ENCODE measurements at regions of chr9 and their contacts with region 1.

Region 1: DNA sequence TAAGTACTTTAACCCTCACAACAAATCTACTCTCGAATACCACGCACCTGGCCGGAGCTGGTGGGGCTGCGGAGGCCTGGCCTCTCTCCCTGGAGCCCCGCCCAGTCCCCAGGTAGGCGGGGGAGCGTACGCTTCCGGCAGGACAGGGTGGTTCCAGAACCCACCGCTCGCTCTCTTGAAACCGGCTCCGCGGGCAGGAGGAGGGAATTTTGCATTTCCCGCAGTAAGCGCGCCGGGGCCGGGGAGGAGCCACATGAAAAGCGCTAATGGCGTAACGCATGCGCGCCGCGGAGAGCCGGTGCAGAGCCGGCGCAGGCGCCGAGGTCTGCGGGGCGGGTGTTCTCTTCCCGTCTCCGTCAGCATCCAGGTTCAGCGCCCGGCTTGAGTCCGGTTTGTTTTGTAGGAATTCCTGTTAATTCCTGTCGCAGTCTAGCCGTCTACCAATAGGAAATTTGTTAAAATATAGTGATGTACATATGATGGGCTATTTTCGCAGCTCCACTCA is 20.8 kb downstream of the CAVIN4 start:
- DNase-seq: peak; percentile 87

Region 2: DNA sequence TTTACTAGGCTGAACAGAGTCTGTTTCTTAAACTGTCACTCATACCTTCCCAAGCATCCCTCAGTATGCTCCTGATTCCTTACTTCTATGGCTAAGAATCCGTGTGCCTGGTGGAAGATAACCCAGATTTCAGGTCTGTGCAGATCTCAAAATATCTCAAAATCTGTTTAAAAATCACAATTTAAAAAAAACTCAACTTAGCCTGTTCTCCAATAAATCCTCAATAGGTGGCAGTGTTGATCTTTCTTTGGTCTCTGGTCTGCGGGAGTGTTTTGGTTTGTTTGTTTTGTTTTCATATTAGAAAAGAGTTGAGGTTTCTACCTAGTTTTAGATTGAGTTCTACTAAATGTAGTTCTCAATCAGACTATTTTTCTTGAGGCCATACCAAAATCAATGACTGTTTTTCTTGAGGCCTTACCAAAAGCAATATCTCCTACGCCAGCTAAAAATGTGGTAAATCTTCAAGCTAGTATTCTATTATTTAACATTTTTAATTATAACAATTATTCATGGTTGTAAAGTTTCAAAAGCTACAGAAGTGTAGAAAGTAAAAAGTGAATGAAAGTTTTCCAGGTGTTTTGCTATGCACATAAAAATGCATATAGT is 1435.8 kb before region 1 on chr9:
- intact Hi-C with region 1: loop called (anchors 10 kb)
- DNase-seq: no peak

Region 3: DNA sequence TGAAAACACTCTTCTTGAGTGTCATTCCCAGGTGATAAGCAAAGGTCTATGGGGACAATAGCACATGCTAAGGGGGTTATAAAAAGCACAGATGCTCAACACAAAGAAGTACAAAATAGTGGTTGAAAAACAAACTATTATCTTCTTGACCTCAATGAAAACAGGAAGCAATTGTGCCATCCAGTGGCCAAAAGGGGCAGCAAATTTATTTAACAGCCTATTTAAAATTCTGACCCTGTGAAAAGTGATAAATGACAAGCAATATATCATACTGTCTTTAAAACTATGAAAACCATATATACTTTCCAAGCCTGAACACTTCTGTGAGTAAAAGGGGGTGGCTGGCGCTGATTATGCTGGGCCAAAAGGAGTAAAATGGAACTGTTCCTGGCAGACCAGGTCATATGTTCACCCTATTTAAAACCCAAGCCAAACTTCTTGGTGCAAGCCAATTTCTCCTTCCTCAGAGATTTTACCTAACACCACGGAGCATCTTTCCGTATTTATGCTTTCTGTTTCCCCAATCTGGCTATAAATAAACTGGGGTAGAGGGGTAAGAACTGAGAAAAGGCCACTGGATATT is 275.6 kb before region 1 on chr9:
- intact Hi-C with region 1: loop called (anchors 10 kb)
- DNase-seq: no peak

Region 4: DNA sequence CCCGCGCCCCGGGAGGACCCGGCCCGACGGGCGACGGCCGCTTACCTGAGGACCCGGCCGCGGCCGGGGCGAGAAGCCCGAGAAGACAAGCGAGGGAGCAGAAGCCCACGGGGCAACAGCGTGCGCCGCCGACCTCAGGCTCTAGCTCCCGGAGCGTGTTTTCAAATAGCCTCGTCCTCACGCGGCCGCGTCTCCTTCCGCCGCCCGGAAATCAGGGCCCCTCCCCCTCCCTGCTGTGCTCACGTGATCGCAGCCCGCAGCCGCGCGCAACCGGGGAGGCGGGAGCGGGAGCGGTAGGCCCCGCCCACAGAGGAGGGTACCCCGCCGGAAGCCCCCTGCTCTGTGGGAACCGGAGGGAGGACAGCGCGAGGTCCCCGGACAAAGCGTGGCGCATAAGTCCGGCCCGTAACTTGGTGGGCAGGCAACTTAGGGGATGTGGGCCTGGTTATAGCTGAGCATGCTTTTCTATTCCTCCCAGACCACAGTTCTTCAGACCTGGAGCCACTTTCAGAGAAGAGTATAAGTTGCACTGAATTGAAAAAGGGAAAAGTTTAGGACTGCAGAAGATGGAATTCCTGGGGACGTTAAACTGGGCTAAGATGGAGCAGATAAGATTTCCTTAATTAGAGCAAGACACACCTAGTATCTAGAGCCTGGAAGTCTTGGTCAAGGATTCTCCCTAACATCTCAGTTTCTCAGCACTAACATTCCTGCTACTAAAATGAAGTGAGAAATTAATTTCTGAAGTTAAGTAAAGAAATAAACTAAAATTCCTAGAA is 245.8 kb before region 1 on chr9 and contains the start of gene TEX10:
- intact Hi-C with region 1: loop called (anchors 5 kb)
- DNase-seq: peak; percentile 94
- total RNA-seq, gene TEX10: 7.6 TPM

Region 5: GRCh38 chr9:100426530-100427428 is 171.9 kb before region 1 on chr9 and contains the start of gene MSANTD3:
- intact Hi-C with region 1: loop called (anchors 5 kb)
- DNase-seq: peak; percentile 81
- total RNA-seq, gene MSANTD3: 32.3 TPM

Region 6: GRCh38 chr9:100449420-100449819 is 149.3 kb before region 1 on chr9:
- intact Hi-C with region 1: loop called (anchors 5 kb)
- DNase-seq: no peak

Region 7: GRCh38 chr9:100848726-100849125 is 250.0 kb after region 1 on chr9:
- intact Hi-C with region 1: no loop called
- DNase-seq: no peak

Region 8: GRCh38 chr9:101311758-101312420 is 713.2 kb after region 1 on chr9:
- intact Hi-C with region 1: loop called (anchors 2 kb)
- DNase-seq: no peak